IMR-90 (cell line): ENCODE measurements at regions of chr1 and their contacts with region 1.

Region 1: GRCh38 chr1:22710701-22711470 is at the start of gene EPHB2:
- DNase-seq: peak; percentile 39
- ATAC-seq: peak; percentile 84
- H3K4me3 ChIP-seq: peak within 1 kb of the TSS; percentile 70
- H3K27ac ChIP-seq: peak within 1 kb of the TSS; percentile 68
- H3K4me1 ChIP-seq: peaks cover 14% of the 10 kb centered on the region
- H3K27me3 ChIP-seq: no peaks in the 10 kb centered on the region
- CTCF ChIP-seq: no peak
- POLR2A ChIP-seq: peak; percentile 94
- RAD21 ChIP-seq: no peak
- total RNA-seq, gene EPHB2: 54.7 and 58.8 TPM in 2 replicates

Region 2: GRCh38 chr1:22733643-22734042 is 22.8 kb after region 1 on chr1:
- CTCF ChIA-PET with region 1: interaction called, 4 read pairs
- POLR2A ChIA-PET with region 1: no interaction called
- dilution Hi-C with region 1: no loop called
- in situ Hi-C with region 1: no loop called
- intact Hi-C with region 1: loop called (anchors 2 kb)
- DNase-seq: no peak
- ATAC-seq: no peak
- H3K4me3 ChIP-seq: no peak overlapping the region
- H3K27ac ChIP-seq: no peak overlapping the region
- H3K4me1 ChIP-seq: peaks cover 14% of the 10 kb centered on the region
- H3K27me3 ChIP-seq: no peaks in the 10 kb centered on the region
- CTCF ChIP-seq: no peak
- POLR2A ChIP-seq: no peak
- RAD21 ChIP-seq: no peak

Region 3: GRCh38 chr1:22739648-22740385 is 28.9 kb after region 1 on chr1:
- CTCF ChIA-PET with region 1: no interaction called
- POLR2A ChIA-PET with region 1: no interaction called
- dilution Hi-C with region 1: no loop called
- in situ Hi-C with region 1: no loop called
- intact Hi-C with region 1: loop called (anchors 1 kb)
- DNase-seq: peak; percentile 94
- ATAC-seq: peak; percentile 91
- H3K4me3 ChIP-seq: no peak overlapping the region
- H3K27ac ChIP-seq: peak overlapping the region; percentile 85
- H3K4me1 ChIP-seq: peaks cover 29% of the 10 kb centered on the region
- H3K27me3 ChIP-seq: no peaks in the 10 kb centered on the region
- CTCF ChIP-seq: no peak
- POLR2A ChIP-seq: no peak
- RAD21 ChIP-seq: no peak